HepG2 (cell line): ENCODE measurements at regions of chr19 and their contacts with region 1.

Region 1: DNA sequence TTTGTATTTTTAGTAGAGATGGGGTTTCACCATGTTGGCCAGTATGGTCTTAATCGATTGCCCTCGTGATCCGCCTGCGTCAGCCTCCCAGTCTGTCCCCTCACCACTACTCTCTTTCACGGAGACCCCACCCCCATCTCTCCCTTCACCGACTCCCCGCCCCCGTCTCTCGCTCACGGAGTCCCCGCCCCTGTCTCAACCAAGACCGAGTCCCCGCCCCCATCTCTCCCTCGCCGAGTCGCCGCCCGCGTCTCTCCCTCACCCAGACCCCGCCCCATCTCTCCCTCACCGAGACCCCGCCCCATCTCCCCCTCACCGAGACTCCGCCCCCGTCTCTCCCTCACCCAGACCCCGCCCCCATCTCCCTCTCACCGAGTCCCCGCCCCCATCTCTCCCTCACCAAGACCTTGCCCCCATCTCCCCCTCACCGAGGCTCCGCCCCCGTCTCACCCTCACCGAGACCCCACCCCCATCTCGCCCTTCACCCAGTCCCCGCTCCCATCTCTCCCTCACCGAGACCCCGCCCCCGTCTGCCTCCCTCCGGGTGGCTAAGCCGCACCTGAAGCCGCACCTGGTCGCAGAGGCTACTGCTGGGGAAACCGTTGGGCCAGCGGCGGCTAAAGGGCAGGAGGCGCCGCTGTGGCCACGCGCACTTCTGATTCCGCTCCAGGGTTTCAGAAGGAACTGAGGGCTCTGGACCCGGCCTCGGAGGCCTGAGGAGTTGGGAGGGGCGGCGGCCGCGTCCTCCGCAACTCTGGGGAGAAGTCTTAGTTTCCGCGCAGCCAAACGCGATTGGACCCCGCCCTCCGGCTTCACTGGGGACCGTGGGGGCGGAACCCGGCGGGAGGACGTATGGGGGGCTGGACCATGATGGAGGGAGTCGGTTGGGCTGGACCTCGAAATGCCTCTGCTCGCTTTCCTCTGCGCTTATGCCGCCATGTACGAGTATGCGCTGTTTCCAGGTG is 17.1 kb upstream of the ZNF846 start:
- DNase-seq: peak; percentile 90
- ATAC-seq: peak; percentile 83
- H3K4me3 ChIP-seq: peak overlapping the region; percentile 74 to 90 (median 80)
- H3K27ac ChIP-seq: peak overlapping the region; percentile 98
- H3K4me1 ChIP-seq: peaks cover 36% of the 10 kb centered on the region
- H3K27me3 ChIP-seq: no peaks in the 10 kb centered on the region
- CTCF ChIP-seq: 0 out of 2 replicates have a peak, but pooled peaks have one; percentile 17
- EP300 ChIP-seq: no peak
- POLR2A ChIP-seq: peak; percentile 54 to 85
- RAD21 ChIP-seq: peak; percentile 44

Region 2: GRCh38 chr19:9140159-9140874 is 645.3 kb before region 1 on chr19 and contains the start of gene ZNF317:
- CTCF ChIA-PET with region 1: no interaction called
- POLR2A ChIA-PET with region 1: no interaction called
- in situ Hi-C with region 1: loop called (anchors 25 kb)
- intact Hi-C with region 1: loop called (anchors 2 kb)
- DNase-seq: peak; percentile 91
- ATAC-seq: peak; percentile 96
- H3K4me3 ChIP-seq: peak within 1 kb of the TSS; percentile 63 to 98 (median 95)
- H3K27ac ChIP-seq: peak within 1 kb of the TSS; percentile 80
- H3K4me1 ChIP-seq: peaks cover 20% of the 10 kb centered on the region
- H3K27me3 ChIP-seq: no peaks in the 10 kb centered on the region; a peak in 1 of 5 replicates
- CTCF ChIP-seq: 0 out of 2 replicates have a peak, but pooled peaks have one; percentile 8
- EP300 ChIP-seq: no peak
- POLR2A ChIP-seq: peak; percentile 90 to 92
- RAD21 ChIP-seq: no peak
- total RNA-seq, gene ZNF317: 27.9 and 31.0 TPM in 2 replicates

Region 3: DNA sequence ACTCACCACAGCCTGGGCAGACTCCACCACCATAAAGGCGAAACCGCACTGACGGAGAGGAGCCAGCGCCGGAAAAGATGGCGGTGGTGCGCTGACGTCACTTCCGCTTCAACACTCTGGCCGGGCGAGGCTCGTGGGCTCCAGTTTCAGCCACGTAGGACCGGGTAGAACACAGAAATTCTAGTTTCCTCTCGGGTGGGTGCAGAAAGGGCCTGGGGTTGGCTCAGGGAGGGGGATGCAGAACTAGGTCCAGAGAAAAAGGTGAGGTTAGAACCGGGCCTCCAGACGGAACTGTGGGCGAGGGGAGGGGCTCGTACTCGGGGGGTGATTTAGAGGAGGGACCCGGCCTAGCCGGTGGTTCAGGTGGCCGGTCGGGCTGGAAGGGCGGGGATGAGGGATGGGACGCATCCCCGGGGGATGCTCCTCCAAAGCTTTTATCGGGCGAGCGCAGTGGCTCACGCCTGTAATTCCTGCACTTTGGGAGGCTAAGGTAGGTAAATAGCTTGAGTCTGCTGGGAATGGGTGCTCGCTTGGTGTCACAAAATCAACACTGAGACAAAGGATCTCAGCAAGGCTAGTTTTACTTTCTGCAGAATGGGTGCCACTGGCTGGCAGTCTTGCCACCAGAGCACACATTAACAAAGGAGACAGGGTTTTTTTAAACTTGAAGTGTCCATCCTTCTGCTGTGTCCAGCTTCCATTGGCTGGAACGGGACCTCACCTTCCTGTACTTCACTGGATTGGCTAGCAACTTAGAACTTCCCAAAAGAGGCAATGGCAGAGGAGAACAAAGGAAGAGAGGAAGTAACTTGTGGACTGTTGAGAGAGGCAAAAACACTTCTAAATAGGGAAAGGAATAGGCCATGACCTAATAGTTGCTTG is 164.3 kb before region 1 on chr19 and contains the start of gene ZNF561:
- CTCF ChIA-PET with region 1: interaction called, 31 read pairs
- POLR2A ChIA-PET with region 1: no interaction called
- in situ Hi-C with region 1: loop called (anchors 5 kb)
- intact Hi-C with region 1: loop called (anchors 1 kb)
- DNase-seq: peak; percentile 86
- ATAC-seq: peak; percentile 92
- H3K4me3 ChIP-seq: peak within 1 kb of the TSS; percentile 87 to 97 (median 91)
- H3K27ac ChIP-seq: peak within 1 kb of the TSS; percentile 99
- H3K4me1 ChIP-seq: peaks cover 25% of the 10 kb centered on the region
- H3K27me3 ChIP-seq: no peaks in the 10 kb centered on the region; a peak in 1 of 5 replicates
- CTCF ChIP-seq: peak; percentile 14
- EP300 ChIP-seq: no peak
- POLR2A ChIP-seq: peak; percentile 70 to 78
- RAD21 ChIP-seq: no peak
- total RNA-seq, gene ZNF561: 35.1 and 54.3 TPM in 2 replicates

Region 4: DNA sequence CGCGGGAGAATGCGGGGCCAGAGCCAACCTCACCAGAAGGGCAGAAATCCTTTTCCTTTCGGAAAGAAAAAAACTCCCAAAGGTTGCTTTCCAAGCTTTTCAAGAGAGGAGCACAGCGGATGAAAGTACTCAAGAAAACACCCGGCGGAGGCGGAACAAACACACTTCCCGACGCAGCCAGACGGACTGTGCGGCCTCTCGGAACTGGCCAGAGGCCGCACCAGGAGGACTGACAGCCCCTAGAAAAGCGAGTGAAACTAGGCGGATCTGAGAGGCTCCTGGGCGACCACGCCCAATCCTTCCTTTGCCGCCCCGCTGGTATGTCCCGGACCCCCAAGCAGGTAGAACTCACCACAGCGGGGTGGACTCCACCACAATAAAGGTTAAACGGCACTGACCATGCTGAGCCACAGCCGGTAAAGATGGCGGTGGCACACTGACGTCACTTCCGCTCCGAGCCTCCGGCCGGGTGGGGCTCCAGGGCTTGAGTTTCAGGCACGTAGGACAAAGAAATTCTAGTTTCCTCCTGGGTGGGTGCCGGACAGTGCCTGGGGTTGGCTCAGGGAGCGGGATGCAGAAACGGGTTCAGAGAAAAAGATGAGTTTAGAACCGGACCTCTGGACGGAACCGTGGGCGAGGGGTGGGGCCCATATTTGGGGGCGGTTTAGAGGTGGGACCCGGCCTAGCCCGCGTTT is 110.8 kb before region 1 on chr19 and contains the start of gene ZNF562:
- CTCF ChIA-PET with region 1: no interaction called
- POLR2A ChIA-PET with region 1: no interaction called
- in situ Hi-C with region 1: no loop called
- intact Hi-C with region 1: loop called (anchors 2 kb)
- DNase-seq: peak; percentile 80
- ATAC-seq: peak; percentile 96
- H3K4me3 ChIP-seq: peak within 1 kb of the TSS; percentile 73 to 95 (median 89)
- H3K27ac ChIP-seq: peak within 1 kb of the TSS; percentile 95
- H3K4me1 ChIP-seq: peaks cover 69% of the 10 kb centered on the region
- H3K27me3 ChIP-seq: no peaks in the 10 kb centered on the region; a peak in 1 of 5 replicates
- CTCF ChIP-seq: no peak
- EP300 ChIP-seq: no peak
- POLR2A ChIP-seq: peak; percentile 59 to 80
- RAD21 ChIP-seq: no peak
- total RNA-seq, gene ZNF562: 32.7 and 43.8 TPM in 2 replicates

Region 5: DNA sequence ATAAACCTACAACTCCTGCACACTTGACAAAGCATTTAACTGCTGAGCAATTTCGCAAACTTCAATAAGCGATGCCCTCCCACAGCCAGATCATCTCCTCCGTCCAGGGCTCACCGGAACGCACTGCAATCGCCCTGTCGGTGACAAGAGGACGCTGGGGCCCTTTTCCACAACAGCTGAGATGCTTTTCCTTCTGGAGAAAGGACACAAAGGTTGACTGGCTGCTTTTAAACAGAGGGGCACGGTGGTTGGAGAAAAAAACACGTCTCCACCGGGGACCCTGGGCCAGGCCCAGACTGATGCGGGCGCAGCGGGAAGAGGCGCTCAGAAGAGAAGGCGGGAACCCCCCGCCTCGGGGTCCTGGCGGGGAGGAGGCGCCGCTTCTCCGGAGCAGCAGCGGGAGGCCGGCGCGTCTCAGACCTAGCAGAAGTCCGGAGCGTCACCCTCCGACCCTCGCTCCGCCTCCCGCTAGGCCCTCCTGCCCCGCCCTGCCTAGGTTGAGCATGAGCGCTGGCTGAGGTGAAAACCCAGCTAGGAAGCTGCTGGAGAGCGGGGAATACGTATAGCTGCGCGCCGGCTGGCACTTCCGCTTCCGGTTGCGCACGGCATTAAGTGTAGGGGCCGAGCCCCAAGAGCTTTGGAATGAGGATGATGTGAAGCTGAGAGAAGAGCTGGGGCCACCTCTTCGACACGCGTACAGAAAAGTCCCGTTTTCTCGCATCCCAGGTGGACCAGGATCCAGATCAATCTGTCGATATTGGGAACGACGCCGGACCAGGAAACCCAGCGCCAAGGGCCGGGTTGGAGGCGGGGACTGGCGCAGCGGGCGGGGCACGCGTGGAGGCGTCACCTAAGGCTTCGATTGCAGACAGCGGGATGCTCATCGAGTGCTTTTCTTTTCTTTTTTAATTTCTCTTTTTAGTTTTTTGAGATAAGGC is 17.2 kb before region 1 on chr19 and contains the start of gene ZNF846:
- CTCF ChIA-PET with region 1: no interaction called
- POLR2A ChIA-PET with region 1: interaction called, 21 read pairs
- in situ Hi-C with region 1: no loop called
- intact Hi-C with region 1: loop called (anchors 2 kb)
- DNase-seq: peak; percentile 92
- ATAC-seq: peak; percentile 99
- H3K4me3 ChIP-seq: peak within 1 kb of the TSS; percentile 67 to 89 (median 84)
- H3K27ac ChIP-seq: peak within 1 kb of the TSS; percentile 87
- H3K4me1 ChIP-seq: peaks cover 10% of the 10 kb centered on the region
- H3K27me3 ChIP-seq: no peaks in the 10 kb centered on the region; a peak in 1 of 5 replicates
- CTCF ChIP-seq: 0 out of 2 replicates have a peak, but pooled peaks have one; percentile 20
- EP300 ChIP-seq: 0 out of 4 replicates have a peak, but pooled peaks of 1 of the 2 experiments have one; percentile 18
- POLR2A ChIP-seq: peak; percentile 76 to 79
- RAD21 ChIP-seq: peak; percentile 43; the same call in 1 of the 2 replicates
- total RNA-seq, gene ZNF846: 3.7 and 5.4 TPM in 2 replicates

Region 6: DNA sequence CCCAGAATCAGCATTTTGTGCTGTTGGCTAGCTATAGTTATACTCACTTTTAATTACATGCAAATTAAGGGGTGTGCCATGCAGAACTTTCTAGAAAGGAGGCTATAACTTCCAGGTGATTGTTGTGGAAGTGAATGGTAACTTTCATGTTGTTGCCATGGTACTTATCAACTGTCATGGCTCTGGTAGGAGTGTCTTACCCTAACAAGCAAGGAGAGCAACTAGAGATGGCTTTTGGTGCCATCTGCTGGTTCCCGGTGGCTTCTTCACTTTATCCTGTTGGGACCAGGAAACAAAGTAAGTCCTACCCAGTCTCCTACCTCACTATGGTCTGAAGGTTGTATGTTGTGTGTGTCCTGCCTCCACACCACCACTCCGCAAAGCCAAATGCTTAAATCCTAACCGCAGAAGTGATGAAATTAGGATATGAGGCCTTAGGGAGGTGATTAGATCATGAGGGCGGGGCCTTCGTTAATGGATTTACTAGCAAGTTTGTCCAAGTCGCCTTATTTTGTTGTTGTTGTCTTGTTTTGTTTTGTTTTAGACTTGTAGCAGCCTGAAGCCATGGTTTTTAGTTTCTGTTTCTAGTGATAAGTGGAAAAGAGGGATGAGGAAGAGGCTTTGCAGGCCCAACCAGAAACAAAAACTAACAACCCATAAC is 10.6 kb after region 1 on chr19:
- CTCF ChIA-PET with region 1: no interaction called
- POLR2A ChIA-PET with region 1: no interaction called
- in situ Hi-C with region 1: no loop called
- intact Hi-C with region 1: no loop called
- DNase-seq: peak; percentile 86
- ATAC-seq: peak; percentile 71
- H3K4me3 ChIP-seq: no peak overlapping the region
- H3K27ac ChIP-seq: no peak overlapping the region
- H3K4me1 ChIP-seq: 0 out of 2 replicates have a peak, but pooled peaks cover under 1% of the 10 kb centered on the region
- H3K27me3 ChIP-seq: no peaks in the 10 kb centered on the region
- CTCF ChIP-seq: peak; percentile 92
- EP300 ChIP-seq: no peak
- POLR2A ChIP-seq: no peak
- RAD21 ChIP-seq: peak; percentile 83

Region 7: GRCh38 chr19:9818734-9819589 is 33.3 kb after region 1 on chr19 and contains the start of gene FBXL12:
- CTCF ChIA-PET with region 1: no interaction called
- POLR2A ChIA-PET with region 1: interaction called, 3 read pairs
- in situ Hi-C with region 1: no loop called
- intact Hi-C with region 1: loop called (anchors 2 kb)
- DNase-seq: peak; percentile 97
- ATAC-seq: peak; percentile 87
- H3K4me3 ChIP-seq: peak within 1 kb of the TSS; percentile 81 to 95 (median 84)
- H3K27ac ChIP-seq: peak within 1 kb of the TSS; percentile 93
- H3K4me1 ChIP-seq: peaks cover 33% of the 10 kb centered on the region
- H3K27me3 ChIP-seq: no peaks in the 10 kb centered on the region; a peak in 1 of 5 replicates
- CTCF ChIP-seq: no peak
- EP300 ChIP-seq: no peak
- POLR2A ChIP-seq: peak; percentile 94 to 97
- RAD21 ChIP-seq: peak; percentile 32; the same call in 1 of the 2 replicates
- total RNA-seq, gene FBXL12: 19.0 and 20.4 TPM in 2 replicates